Activated CD4-positive, alpha-beta T cell treated with anti-CD3 and anti-CD28 coated beads for 36 hours (primary cell): ENCODE measurements at regions of chr19 and their contacts with region 1.

Region 1: DNA sequence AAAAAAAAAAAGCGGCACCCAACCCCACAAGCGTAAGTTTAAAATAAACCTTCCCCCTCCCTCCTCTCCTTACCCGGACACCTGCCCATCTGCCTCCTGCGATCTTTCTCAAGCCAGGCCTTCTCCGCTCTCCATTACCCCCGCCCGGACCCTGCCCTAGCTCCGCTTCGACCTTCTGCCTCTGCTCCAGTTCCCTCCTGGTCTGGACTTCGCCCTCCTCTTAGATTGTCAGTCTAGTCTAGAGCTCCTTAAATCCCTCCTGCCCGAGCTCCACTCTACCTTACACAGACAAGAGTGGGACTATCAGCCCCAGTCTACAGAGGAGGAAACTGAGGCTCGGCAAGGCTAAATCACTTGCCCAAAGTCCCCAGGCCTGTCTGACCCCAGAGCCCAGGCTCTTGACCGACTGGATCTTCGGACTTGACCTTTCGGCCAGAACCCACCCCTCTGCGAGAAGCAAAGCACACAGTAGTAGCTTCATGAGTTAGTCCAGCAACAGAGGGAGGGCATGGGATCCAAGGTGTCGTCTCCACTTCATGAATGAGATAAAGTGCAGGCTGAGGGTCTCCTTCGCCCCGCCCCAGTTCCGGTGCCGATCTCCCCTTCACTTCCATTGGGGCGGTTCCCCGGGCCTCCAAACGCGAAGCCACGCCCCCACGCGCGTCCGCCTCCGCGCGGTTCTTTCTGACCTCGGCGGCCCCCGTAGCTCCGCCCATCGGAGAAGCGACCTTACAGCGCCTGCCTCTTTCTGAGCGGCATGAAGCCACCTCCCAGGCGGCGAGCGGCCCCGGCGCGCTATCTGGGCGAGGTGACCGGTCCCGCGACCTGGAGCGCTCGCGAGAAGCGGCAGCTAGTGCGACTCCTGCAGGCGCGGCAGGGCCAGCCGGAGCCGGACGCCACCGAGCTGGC is at the start of gene SNAPC2:
- DNase-seq: peak; percentile 98
- ATAC-seq: peak; percentile 76
- H3K4me3 Mint-ChIP-seq: peak within 1 kb of the TSS; percentile 82
- H3K27ac Mint-ChIP-seq: peak within 1 kb of the TSS; percentile 87
- H3K4me1 Mint-ChIP-seq: peaks cover 32% of the 10 kb centered on the region
- H3K27me3 Mint-ChIP-seq: peaks cover 20% of the 10 kb centered on the region
- total RNA-seq, gene SNAPC2: 14.6 to 16.2 TPM

Region 2: GRCh38 chr19:7629347-7630054 is 290.4 kb before region 1 on chr19 and contains the starts of genes PET100 and XAB2:
- CTCF ChIA-PET with region 1: no interaction called
- POLR2A ChIA-PET with region 1: no interaction called
- intact Hi-C with region 1: loop called in 1 of 2 experiments (anchors 1 kb)
- DNase-seq: peak; percentile 97
- ATAC-seq: peak; percentile 99
- H3K4me3 Mint-ChIP-seq: peak within 1 kb of the TSS; percentile 88
- H3K27ac Mint-ChIP-seq: peak within 1 kb of the TSS; percentile 97
- H3K4me1 Mint-ChIP-seq: peaks cover 32% of the 10 kb centered on the region
- H3K27me3 Mint-ChIP-seq: no peaks in the 10 kb centered on the region
- total RNA-seq, gene PET100: 45.1 to 99.4 TPM
- total RNA-seq, gene XAB2: 45.9 to 48.3 TPM

Region 3: DNA sequence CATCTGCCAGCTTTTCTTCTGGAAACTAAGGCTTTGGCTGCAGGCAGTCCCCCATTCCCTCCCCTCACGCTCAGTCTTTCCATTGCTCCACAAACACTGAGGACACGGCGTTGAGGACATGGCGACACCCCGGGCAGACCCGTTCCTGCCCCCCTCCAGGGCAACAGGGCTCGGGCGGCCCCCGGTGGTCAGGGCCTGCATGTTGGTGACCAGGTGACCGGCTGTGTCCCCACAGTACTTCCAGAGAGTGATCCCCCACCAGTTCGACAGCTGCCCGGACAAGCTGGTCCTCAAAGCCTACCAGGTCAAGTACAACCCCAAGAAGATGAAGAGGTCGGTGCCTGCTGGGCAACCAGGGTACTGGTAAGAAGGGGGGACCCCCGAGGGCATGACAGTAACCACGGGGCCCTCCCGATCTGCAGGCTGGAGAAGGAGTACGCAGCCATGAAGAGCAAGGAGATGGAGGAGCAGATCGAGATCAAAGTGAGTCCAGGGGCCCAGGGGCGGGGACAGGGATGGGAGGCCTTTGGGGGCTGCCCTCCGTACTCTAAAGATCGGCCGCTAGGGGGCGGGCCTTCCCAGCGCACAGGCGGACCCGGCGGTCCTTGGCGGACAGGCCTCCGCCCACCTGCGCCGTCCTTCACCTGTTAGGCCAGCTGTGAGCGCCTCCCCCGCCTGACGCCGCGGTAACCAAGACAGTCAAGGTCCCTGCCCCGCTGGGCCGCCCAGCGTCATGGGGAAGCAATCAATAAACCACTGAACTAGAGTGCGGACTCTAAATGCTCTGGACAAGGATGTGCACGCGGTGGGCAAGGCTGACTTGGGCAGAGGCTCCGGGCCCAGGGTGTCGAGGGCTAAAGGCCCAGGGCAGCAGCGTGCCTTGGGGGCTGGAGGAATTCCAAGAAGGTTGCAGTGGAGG is 66.8 kb before region 1 on chr19:
- CTCF ChIA-PET with region 1: interaction called, 4 read pairs
- POLR2A ChIA-PET with region 1: no interaction called
- intact Hi-C with region 1: loop called (anchors 1 to 5 kb)
- DNase-seq: peak; percentile 85
- ATAC-seq: peak; percentile 89
- H3K4me3 Mint-ChIP-seq: no peak overlapping the region
- H3K27ac Mint-ChIP-seq: no peak overlapping the region
- H3K4me1 Mint-ChIP-seq: peaks cover 3% of the 10 kb centered on the region
- H3K27me3 Mint-ChIP-seq: no peaks in the 10 kb centered on the region

Region 4: DNA sequence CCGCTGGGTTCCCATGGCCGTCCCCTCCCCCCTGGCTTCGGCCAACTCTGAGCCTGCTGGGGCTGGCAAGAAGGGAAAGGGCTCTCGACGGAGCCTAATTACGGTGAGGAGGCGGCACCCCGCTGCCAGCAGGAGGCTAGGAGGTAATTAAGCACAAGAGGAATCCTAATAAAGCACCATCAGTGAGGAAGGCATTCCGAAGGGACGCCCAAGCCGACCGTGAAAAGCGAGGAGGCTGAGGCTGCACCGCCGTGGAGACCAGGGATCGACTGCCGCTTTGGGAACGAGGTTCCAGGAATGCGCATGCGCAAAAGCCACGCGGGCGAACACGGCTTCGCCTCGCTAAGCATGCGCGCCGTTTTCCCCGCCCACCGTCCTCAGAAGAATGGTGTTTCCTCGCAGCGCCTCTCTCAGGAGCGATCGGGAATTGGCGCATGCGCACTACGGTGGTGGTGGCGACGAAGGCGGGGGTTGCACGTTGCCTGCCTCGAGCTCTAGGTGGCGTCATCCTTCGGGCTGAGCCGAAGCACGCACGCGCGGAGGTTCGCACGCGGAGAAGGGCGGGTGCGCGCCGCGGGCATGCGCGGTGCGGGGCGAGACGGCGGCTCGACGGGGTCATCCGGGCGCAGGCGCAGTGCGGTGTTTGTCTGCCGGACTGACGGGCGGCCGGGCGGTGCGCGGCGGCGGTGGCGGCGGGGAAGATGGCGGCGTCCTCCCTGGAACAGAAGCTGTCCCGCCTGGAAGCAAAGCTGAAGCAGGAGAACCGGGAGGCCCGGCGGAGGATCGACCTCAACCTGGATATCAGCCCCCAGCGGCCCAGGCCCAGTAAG is 16.4 kb before region 1 on chr19 and contains the start of gene MAP2K7:
- CTCF ChIA-PET with region 1: interaction called, 6 read pairs
- POLR2A ChIA-PET with region 1: interaction called, 4 read pairs
- intact Hi-C with region 1: loop called (anchors 1 kb)
- DNase-seq: peak; percentile 100
- ATAC-seq: peak; percentile 91
- H3K4me3 Mint-ChIP-seq: peak within 1 kb of the TSS; percentile 85
- H3K27ac Mint-ChIP-seq: peak within 1 kb of the TSS; percentile 92
- H3K4me1 Mint-ChIP-seq: peaks cover 22% of the 10 kb centered on the region
- H3K27me3 Mint-ChIP-seq: no peaks in the 10 kb centered on the region
- total RNA-seq, gene MAP2K7: 32.2 to 33.7 TPM

Region 5: GRCh38 chr19:8005534-8006256 is 85.8 kb after region 1 on chr19 and contains the start of gene ELAVL1:
- CTCF ChIA-PET with region 1: interaction called, 3 read pairs
- POLR2A ChIA-PET with region 1: no interaction called
- intact Hi-C with region 1: loop called in 1 of 2 experiments (anchors 1 kb)
- DNase-seq: peak; percentile 95
- ATAC-seq: peak; percentile 93
- H3K4me3 Mint-ChIP-seq: peak within 1 kb of the TSS; percentile 95
- H3K27ac Mint-ChIP-seq: peak within 1 kb of the TSS; percentile 94
- H3K4me1 Mint-ChIP-seq: peaks cover 36% of the 10 kb centered on the region
- H3K27me3 Mint-ChIP-seq: no peaks in the 10 kb centered on the region
- total RNA-seq, gene ELAVL1: 149 to 184 TPM

Region 6: DNA sequence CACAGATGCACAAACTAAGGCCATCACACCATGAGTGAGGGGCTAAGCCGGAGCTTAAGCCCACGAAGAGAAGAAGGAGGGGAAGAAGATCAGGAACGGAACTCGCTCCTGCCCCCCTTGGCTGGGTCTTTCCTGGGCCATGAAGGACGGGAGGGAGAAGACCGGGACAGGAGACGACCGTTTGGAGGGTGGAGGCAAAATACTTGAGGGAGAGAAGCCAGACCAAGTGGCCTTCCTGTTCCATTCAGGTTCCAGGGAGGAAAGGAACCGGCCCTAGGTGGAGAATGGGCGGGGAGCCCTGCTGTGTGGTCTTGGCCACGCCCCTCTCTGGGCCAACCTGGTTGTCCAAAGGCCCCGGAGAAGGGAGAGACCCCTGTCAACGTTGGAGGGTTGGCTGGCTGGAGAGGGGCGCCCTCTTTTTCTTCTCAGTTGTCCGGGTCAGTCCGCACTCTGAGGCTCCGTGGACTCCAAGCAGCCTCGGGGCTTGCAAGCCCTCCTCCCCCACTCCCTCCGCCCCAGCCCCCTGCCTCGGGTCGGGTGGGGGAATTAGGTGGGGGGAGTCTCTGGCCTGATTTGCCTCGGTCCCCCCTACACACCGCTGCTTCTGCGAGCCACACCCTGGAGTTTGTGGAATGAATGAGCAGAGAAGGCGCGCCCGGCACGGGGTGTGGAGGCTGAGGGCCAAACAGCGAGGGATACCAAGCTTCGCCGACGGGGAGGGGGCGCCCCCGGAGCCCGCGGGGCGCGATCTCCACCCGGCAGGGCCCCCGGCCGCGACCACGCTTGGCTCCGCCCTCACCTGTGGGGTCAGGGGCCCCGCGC is 228.8 kb after region 1 on chr19:
- CTCF ChIA-PET with region 1: no interaction called
- POLR2A ChIA-PET with region 1: no interaction called
- intact Hi-C with region 1: no loop called
- DNase-seq: peak; percentile 26
- ATAC-seq: no peak
- H3K4me3 Mint-ChIP-seq: no peak overlapping the region
- H3K27ac Mint-ChIP-seq: no peak overlapping the region
- H3K4me1 Mint-ChIP-seq: peaks cover 5% of the 10 kb centered on the region
- H3K27me3 Mint-ChIP-seq: peaks cover 36% of the 10 kb centered on the region

Region 7: GRCh38 chr19:8208922-8209461 is 289.1 kb after region 1 on chr19 and contains the start of gene CERS4:
- CTCF ChIA-PET with region 1: no interaction called
- POLR2A ChIA-PET with region 1: no interaction called
- intact Hi-C with region 1: loop called in 1 of 2 experiments (anchors 1 kb)
- DNase-seq: peak; percentile 89
- ATAC-seq: peak; percentile 83
- H3K4me3 Mint-ChIP-seq: peak within 1 kb of the TSS; percentile 83
- H3K27ac Mint-ChIP-seq: peak within 1 kb of the TSS; percentile 94
- H3K4me1 Mint-ChIP-seq: peaks cover 24% of the 10 kb centered on the region
- H3K27me3 Mint-ChIP-seq: no peaks in the 10 kb centered on the region
- total RNA-seq, gene CERS4: 21.2 to 21.8 TPM